Activated CD4-positive, alpha-beta T cell treated with anti-CD3 and anti-CD28 coated beads for 36 hours (primary cell): ENCODE measurements at regions of chr6 and their contacts with region 1.

Region 1: DNA sequence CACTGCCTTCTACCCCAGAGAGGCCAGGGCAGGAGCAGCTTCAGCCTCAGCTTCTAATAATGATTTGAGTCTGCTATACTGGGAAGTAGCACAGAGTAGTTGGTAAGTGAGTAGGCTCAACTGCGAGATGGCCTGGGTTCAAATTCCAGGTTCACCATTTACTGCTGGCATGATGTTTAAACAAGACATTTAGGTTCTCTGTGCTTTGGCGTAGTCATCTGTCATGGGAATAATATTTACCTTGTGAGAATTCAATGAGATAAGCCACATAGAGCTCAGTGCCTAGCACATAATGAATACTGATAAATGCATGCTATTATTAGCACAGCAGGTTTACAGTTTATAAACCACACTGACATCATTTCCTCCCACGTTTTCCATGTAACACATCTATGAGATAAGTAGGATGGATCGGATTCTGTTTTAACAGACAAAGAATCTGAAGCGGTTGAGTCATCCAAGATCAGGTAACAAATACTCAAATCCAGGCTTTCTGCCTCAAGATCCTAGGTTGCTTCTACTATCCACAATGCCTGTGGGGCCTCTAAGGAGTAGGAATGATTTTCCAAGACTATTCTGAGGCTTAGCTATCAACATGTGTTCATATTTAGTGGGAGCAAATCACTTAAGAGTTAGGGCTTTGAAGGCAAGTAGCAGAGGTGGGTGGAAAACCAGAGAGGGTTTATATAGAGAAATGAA is 72.9 kb upstream of the DTNBP1 start:
- DNase-seq: peak; percentile 20
- ATAC-seq: peak; percentile 81
- H3K4me3 Mint-ChIP-seq: peak overlapping the region; percentile 54
- H3K27ac Mint-ChIP-seq: peak overlapping the region; percentile 83
- H3K4me1 Mint-ChIP-seq: peaks cover 54% of the 10 kb centered on the region
- H3K27me3 Mint-ChIP-seq: no peaks in the 10 kb centered on the region

Region 2: DNA sequence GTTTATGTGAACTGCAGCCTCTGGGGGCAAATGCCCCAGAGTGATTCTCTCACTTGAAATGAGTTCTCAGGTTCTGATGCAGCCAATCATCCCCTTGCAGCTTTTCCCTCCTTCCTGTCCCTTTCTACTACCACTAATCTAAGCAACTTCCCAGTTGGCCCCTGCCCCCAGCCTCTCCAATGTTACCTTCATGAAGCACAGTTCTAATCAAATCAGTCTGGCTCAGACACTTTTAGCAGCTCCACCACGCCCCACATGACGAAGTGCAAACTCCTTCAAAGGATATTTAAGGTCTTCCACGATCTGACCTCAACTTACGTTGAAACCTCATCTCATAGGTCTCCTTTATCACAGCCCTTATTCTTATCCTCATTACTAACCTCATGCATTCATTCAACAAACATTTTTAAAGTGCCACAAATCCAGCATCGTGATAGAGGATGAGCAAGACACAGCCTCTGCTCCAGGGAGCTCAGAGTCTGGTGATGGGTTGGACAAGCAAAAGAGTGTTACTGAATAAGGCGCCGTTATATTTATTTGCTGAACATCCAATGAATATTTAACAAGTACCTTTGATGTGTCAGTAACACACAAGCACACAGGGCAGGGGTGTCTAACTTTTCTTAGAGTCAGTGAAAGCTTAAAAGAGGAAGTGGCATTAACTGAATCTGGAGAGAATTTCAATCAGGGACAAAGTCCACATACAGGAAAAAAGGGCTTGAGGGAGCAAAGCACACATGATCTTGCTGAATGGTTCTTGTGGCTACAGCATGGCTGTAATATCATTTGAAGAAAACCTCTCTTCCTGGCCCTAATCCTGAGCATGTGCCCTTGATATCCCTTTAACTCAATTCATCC is 52.5 kb before region 1 on chr6:
- CTCF ChIA-PET with region 1: no interaction called
- POLR2A ChIA-PET with region 1: no interaction called
- intact Hi-C with region 1: no loop called
- DNase-seq: no peak
- ATAC-seq: no peak
- H3K4me3 Mint-ChIP-seq: no peak overlapping the region
- H3K27ac Mint-ChIP-seq: no peak overlapping the region
- H3K4me1 Mint-ChIP-seq: no peaks in the 10 kb centered on the region
- H3K27me3 Mint-ChIP-seq: peaks cover 5% of the 10 kb centered on the region

Region 3: DNA sequence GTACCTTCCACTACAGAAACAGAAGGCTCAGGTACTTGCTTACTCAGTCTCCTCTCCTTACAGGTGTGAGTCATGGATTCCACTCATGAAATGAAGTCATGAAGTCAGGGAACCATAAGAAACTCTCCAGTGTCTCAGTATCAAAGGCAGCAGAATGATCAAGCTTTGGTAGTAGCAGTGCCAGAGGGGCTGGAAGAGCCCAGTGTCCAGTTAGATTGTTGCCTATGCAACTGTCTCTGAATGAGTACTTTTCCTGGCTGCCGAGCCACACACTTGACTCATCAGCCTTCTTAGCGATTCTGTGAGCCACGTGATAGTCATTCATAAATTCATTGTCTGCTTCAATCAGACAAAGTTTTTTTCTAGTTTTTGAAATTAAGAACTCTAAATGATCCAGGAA is 20.7 kb before region 1 on chr6:
- CTCF ChIA-PET with region 1: interaction called, 3 read pairs
- POLR2A ChIA-PET with region 1: interaction called, 3 read pairs
- intact Hi-C with region 1: loop called in 1 of 2 experiments (anchors 1 kb)
- DNase-seq: peak; percentile 70
- ATAC-seq: peak; percentile 97
- H3K4me3 Mint-ChIP-seq: no peak overlapping the region
- H3K27ac Mint-ChIP-seq: peak overlapping the region; percentile 86
- H3K4me1 Mint-ChIP-seq: peaks cover 26% of the 10 kb centered on the region
- H3K27me3 Mint-ChIP-seq: peaks cover 6% of the 10 kb centered on the region